ENCODE measurements at regions of chr7 and their contacts with region 1.

Region 1: GRCh38 chr7:128209229-128210035 is 31.6 kb upstream of the LEP start:
- DNase-seq: peak; percentile 49
- H3K4me3 Mint-ChIP-seq: no peak overlapping the region
- H3K27ac Mint-ChIP-seq: no peak overlapping the region
- H3K4me1 Mint-ChIP-seq: no peaks in the 10 kb centered on the region
- H3K27me3 Mint-ChIP-seq: peaks cover 20% of the 10 kb centered on the region

Region 2: GRCh38 chr7:127504715-127505114 is 704.7 kb before region 1 on chr7:
- intact Hi-C with region 1: loop called (anchors 1 kb)
- DNase-seq: no peak
- H3K4me3 Mint-ChIP-seq: no peak overlapping the region
- H3K27ac Mint-ChIP-seq: no peak overlapping the region
- H3K4me1 Mint-ChIP-seq: no peaks in the 10 kb centered on the region
- H3K27me3 Mint-ChIP-seq: peaks cover 11% of the 10 kb centered on the region

Region 3: GRCh38 chr7:128135515-128136214 is 73.8 kb before region 1 on chr7:
- intact Hi-C with region 1: loop called (anchors 1 kb)
- DNase-seq: peak; percentile 53
- H3K4me3 Mint-ChIP-seq: peak overlapping the region; percentile 77
- H3K27ac Mint-ChIP-seq: no peak overlapping the region
- H3K4me1 Mint-ChIP-seq: peaks cover 14% of the 10 kb centered on the region
- H3K27me3 Mint-ChIP-seq: peaks cover 60% of the 10 kb centered on the region

Region 4: DNA sequence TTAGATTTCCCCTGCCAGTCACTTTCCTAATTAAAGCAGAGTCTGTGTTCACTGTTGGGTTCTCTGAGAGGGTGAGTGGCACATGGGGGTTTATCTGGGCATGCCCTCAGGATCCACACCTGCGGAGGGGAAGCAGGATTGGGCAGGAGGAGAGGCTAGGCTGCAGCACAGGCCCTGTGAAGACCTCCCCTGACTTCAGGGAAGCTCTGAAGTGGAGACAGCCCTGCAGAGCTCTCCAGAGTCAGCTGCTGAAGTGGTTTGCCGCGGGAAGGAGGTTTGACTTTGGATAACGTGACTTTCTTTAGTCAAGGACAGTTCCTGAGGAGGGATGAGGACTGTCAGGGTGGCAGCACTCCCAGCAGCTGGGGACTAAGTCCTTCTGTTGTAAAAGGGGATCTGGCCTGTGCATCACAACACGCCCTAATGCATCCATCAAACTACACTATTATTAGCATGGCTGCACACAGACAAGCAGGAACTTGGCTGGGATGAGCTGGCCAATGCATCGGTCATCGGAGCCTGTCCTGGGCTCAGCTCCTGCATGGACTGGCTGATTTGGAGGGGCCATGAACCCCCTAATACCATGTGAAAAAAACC is 19.3 kb before region 1 on chr7:
- intact Hi-C with region 1: no loop called
- DNase-seq: no peak
- H3K4me3 Mint-ChIP-seq: no peak overlapping the region
- H3K27ac Mint-ChIP-seq: no peak overlapping the region
- H3K4me1 Mint-ChIP-seq: no peaks in the 10 kb centered on the region
- H3K27me3 Mint-ChIP-seq: peaks cover 25% of the 10 kb centered on the region